Adrenal gland (tissue), 19 donors: ENCODE measurements at regions of chr1 and their contacts with region 1.

Region 1: DNA sequence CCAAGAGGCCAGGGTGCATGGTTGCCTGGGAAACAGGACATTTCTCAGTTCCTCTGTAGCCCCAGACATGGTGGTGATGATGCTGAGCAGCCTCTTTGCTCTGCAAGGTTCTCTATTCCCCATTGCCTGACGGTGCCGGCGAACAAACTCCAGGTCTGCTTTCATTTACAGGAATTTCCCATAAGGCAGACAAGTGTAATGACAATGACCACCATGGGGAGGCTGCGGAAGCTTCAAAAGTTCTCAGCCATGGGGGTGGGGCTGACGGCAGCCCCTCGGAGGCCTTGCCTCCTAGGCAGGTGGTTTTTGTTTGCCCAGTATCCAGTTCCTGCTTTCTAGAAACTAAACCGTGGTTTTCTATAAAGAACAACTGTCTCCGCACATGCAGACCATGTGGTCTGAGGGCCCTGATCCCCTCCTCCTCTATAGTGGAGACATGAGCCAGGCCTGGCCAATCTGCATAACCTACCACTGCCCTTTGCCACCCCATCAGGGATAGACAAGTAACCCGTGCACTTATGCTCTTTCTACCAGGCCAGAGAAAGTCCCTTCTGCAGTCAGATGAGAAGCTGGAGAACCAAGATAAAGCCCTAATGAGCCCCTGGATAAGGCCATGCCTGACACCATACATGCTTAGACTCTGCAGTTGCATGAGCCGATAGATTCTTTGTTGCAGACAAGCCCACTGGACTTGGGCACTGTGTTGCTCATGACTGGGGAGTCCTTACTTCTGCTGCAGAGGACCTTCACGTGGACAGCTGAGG is 54.1 kb downstream of the LDLRAD2 start:
- DNase-seq: no peak
- H3K4me3 ChIP-seq: no peak overlapping the region
- H3K27ac ChIP-seq: peak overlapping the region in 1 of 5 donors; percentile 3
- H3K4me1 ChIP-seq: peaks cover 6 to 22% of the 10 kb centered on the region in 2 donors
- H3K27me3 ChIP-seq: no peaks in the 10 kb centered on the region
- CTCF ChIP-seq: no peak
- POLR2A ChIP-seq: no peak

Region 2: DNA sequence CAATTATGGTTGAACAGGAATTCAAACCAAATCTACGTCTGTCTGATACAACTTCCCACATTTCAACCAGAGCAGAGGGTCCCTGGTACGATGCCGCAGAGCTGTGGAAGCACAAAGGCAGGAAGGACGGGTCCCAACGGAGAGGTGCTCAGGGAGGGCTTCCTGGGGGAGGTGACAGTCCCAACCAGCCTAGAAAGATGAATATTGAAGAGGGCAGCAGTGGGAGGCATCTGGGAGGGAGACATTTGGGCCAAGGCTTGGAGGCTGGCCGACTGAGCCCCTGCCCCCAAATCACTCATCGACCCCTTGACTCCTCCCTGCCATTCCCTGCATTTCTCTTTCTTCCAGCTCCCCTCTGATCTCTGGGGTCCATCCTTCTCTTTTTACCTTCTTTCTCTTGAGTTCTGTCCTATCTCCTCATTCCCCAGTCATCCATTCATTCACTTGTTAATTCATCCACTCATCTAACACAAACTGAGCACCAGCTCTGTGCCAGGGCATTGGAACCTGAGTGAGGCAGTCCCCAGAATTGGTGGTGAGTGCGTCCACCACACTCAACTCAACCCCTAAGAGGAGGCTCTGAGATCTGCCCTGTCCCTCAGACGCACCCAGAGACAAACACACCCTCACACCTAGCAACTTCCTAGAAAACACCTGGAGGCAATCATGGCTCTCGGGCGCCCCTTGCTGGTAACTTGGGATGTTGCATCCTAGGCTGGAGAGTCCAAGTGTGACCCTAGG is 97.5 kb after region 1 on chr1:
- intact Hi-C with region 1: loop called in 1 of 2 experiments (anchors 10 kb)
- DNase-seq: peak; percentile 70 to 93 (median 82)
- H3K4me3 ChIP-seq: no peak overlapping the region
- H3K27ac ChIP-seq: no peak overlapping the region
- H3K4me1 ChIP-seq: no peaks in the 10 kb centered on the region
- H3K27me3 ChIP-seq: no peaks in the 10 kb centered on the region
- CTCF ChIP-seq: peak; percentile 90 to 94 (median 92)
- POLR2A ChIP-seq: no peak